ENCODE measurements at regions of chr7 and their contacts with region 1.

Region 1: GRCh38 chr7:54292171-54292925 is 249.8 kb upstream of the VSTM2A start:
- DNase-seq: no peak
- H3K4me3 ChIP-seq: no peak overlapping the region
- H3K27ac ChIP-seq: no peak overlapping the region
- H3K4me1 ChIP-seq: no peaks in the 10 kb centered on the region
- H3K27me3 ChIP-seq: no peaks in the 10 kb centered on the region

Region 2: GRCh38 chr7:54215424-54215823 is 76.9 kb before region 1 on chr7:
- in situ Hi-C with region 1: loop called (anchors 10 kb)
- DNase-seq: no peak
- H3K4me3 ChIP-seq: no peak overlapping the region
- H3K27ac ChIP-seq: no peak overlapping the region
- H3K4me1 ChIP-seq: no peaks in the 10 kb centered on the region
- H3K27me3 ChIP-seq: no peaks in the 10 kb centered on the region